AG04449 (cell line): ENCODE measurements at regions of chr12 and their contacts with region 1.

Region 1: GRCh38 chr12:57693659-57694458 is at the start of gene OS9:
- DNase-seq: peak; percentile 99
- H3K4me3 ChIP-seq: peak within 1 kb of the TSS; percentile 92
- CTCF ChIP-seq: peak; percentile 69

Region 2: GRCh38 chr12:57735952-57736740 is 42.3 kb after region 1 on chr12:
- CTCF ChIA-PET with region 1: interaction called, 17 read pairs
- POLR2A ChIA-PET with region 1: no interaction called
- DNase-seq: no peak
- H3K4me3 ChIP-seq: peak overlapping the region; percentile 36
- CTCF ChIP-seq: peak; percentile 68

Region 3: DNA sequence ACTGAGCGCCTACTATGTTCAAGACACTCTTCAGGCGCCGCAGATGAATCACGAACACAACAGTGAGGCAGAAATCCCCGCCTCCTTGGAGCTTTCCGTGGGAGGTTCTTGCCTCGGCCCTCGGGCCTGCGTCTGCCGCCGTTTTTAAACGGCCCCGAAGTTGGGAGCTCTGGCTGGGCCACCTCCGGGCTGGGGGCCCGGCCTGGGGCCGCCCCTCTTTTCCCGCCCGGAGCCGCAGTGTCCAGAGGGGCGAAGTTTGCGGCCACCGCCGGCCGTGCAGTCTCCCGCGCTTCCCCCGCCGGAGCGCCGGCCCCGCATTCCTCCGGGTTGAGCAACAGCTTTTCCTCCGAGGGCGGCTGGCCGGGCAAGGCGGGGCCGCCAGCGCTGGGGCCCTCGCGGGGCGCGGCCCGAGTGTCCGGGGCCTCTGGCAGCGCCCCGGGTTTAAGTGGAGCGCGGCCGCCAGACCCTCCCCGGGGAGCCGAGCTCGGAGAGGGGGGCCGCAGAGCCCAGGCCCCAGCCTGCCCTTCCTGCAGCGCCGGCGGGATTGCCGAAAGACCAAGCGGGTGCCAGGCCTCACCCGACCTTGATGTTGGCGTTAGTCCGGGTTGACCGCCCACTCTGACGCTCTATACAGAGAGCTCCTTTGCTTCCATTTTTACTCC is 171.4 kb after region 1 on chr12:
- CTCF ChIA-PET with region 1: no interaction called
- POLR2A ChIA-PET with region 1: no interaction called
- DNase-seq: no peak
- H3K4me3 ChIP-seq: peak overlapping the region; percentile 52
- CTCF ChIP-seq: no peak

Region 4: GRCh38 chr12:58081488-58081887 is 387.6 kb after region 1 on chr12:
- CTCF ChIA-PET with region 1: no interaction called
- POLR2A ChIA-PET with region 1: no interaction called
- DNase-seq: no peak
- H3K4me3 ChIP-seq: no peak overlapping the region
- CTCF ChIP-seq: no peak

Region 5: GRCh38 chr12:58225203-58225877 is 531.5 kb after region 1 on chr12:
- CTCF ChIA-PET with region 1: no interaction called
- POLR2A ChIA-PET with region 1: no interaction called
- DNase-seq: no peak
- H3K4me3 ChIP-seq: no peak overlapping the region
- CTCF ChIP-seq: no peak